ENCODE measurements at regions of chr3 and their contacts with region 1.

Region 1: DNA sequence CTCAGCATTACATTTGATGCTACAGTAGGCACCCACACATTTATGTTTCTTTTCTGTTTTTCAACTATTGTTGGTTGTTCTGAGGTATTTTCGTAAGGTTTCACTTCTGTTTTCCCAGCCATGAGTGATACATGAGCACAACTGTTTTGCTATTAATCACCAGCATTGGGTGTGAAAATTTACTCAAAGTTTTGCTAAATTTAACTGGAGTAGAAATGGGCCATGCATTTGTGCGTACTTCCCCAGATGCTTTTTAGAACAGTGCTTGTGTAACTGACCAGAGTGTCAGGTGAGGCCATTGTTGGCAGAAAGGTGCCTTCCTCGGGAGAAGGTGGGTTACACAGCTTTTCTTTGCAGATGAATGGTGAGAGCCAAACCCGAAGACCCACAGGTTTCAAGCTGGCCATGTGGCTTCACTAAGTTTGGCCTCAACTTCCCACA is 70.4 kb downstream of the ST6GAL1 start:
- DNase-seq: peak; percentile 78
- H3K4me3 Mint-ChIP-seq: peak overlapping the region; percentile 63
- H3K27ac Mint-ChIP-seq: peak overlapping the region; percentile 87
- H3K4me1 Mint-ChIP-seq: peaks cover 56% of the 10 kb centered on the region
- H3K27me3 Mint-ChIP-seq: no peaks in the 10 kb centered on the region

Region 2: DNA sequence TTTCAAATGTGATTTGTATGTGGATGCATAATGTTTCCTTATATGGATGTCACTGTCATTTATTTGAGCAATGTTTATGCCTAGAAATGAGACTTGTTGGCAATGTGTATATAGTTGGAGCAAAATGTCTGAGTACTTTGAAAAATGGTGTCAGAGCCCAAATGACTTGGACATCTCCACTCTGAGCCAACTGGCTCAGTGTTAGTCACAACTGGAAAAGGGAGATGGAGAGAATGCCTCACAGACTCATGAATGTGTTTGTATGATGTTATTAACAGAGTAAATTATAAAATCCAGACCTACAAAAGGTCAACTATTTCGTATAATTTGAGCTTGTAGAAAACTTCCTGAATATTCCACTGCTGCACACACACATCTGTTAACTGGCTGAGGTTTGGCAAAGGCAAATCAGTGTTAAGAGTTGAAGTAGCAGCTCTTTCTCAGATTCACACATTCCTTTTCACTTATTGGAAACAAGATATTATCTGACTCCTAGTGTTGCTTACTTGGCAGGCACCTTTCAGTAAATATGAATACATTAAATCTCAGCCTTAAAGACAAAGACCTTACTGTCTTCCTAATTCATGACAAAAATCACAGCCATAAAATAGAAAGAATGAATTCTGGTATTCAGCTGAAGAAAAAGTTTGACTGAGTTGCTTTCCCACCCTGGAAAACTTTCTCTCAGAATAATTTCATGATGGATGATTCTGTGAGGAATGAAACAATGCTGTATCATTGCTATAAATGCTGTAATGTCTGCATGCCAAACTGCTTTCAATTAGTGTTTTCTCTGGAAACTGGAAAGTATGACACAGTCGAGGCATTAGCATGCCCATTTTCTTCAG is 131.3 kb before region 1 on chr3:
- intact Hi-C with region 1: loop called (anchors 5 kb)
- DNase-seq: peak; percentile 26
- H3K4me3 Mint-ChIP-seq: no peak overlapping the region
- H3K27ac Mint-ChIP-seq: peak overlapping the region; percentile 34
- H3K4me1 Mint-ChIP-seq: peaks cover 30% of the 10 kb centered on the region
- H3K27me3 Mint-ChIP-seq: no peaks in the 10 kb centered on the region

Region 3: GRCh38 chr3:186882881-186883685 is 117.6 kb before region 1 on chr3:
- intact Hi-C with region 1: loop called (anchors 1 kb)
- DNase-seq: peak; percentile 80
- H3K4me3 Mint-ChIP-seq: peak overlapping the region; percentile 52
- H3K27ac Mint-ChIP-seq: peak overlapping the region; percentile 89
- H3K4me1 Mint-ChIP-seq: peaks cover 53% of the 10 kb centered on the region
- H3K27me3 Mint-ChIP-seq: no peaks in the 10 kb centered on the region

Measured in activated CD4-positive, alpha-beta T cell treated with anti-CD3 and anti-CD28 coated beads, Interleukin-2, amount 10 ng/mL, durations not matched to agents 24 days and 14 days (primary cell).